Endothelial cell of umbilical vein (primary cell): ENCODE measurements at regions of chr10 and their contacts with region 1.

Region 1: GRCh38 chr10:74234569-74234968 is 83.5 kb downstream of the ADK start:
- DNase-seq: peak; percentile 36
- H3K4me3 ChIP-seq: no peak overlapping the region
- H3K27ac ChIP-seq: no peak overlapping the region
- H3K4me1 ChIP-seq: peaks cover 41% of the 10 kb centered on the region
- H3K27me3 ChIP-seq: no peaks in the 10 kb centered on the region
- CTCF ChIP-seq: no peak
- POLR2A ChIP-seq: no peak

Region 2: DNA sequence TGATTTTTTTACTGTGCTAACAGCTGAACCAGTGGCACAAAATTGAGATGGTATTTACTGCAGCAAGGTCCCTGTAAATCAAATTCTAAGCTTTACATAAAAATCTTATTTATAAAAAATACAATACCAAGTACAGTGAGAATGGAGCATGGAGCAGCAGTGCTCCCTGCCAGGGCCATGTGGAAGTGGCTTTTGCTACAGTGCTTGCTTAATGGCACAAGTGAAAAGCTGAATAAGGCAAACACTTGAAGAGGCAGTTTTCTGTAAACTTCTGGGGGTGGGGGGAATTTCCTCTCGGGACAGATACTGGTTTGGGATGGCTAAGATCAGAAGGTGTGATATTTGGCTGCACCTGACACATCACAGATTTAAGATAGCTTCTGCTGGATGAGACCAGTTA is 111.5 kb before region 1 on chr10:
- CTCF ChIA-PET with region 1: interaction called, 97 read pairs
- POLR2A ChIA-PET with region 1: no interaction called
- dilution Hi-C with region 1: no loop called
- intact Hi-C with region 1: loop called (anchors 1 kb)
- DNase-seq: no peak
- H3K4me3 ChIP-seq: no peak overlapping the region
- H3K27ac ChIP-seq: no peak overlapping the region
- H3K4me1 ChIP-seq: peaks cover 5% of the 10 kb centered on the region
- H3K27me3 ChIP-seq: no peaks in the 10 kb centered on the region
- CTCF ChIP-seq: no peak
- POLR2A ChIP-seq: no peak

Region 3: GRCh38 chr10:74145133-74145532 is 89.4 kb before region 1 on chr10:
- CTCF ChIA-PET with region 1: interaction called, 31 read pairs
- POLR2A ChIA-PET with region 1: interaction called, 3 read pairs
- dilution Hi-C with region 1: no loop called
- intact Hi-C with region 1: loop called (anchors 2 kb)
- DNase-seq: peak; percentile 97
- H3K4me3 ChIP-seq: peak overlapping the region in 1 of 3 experiments; percentile 33
- H3K27ac ChIP-seq: peak overlapping the region; percentile 47
- H3K4me1 ChIP-seq: peaks cover 25% of the 10 kb centered on the region
- H3K27me3 ChIP-seq: no peaks in the 10 kb centered on the region
- CTCF ChIP-seq: no peak
- POLR2A ChIP-seq: no peak

Region 4: GRCh38 chr10:74176380-74177139 is 58.0 kb before region 1 on chr10:
- CTCF ChIA-PET with region 1: interaction called, 7 read pairs
- POLR2A ChIA-PET with region 1: interaction called, 6 read pairs
- dilution Hi-C with region 1: no loop called
- intact Hi-C with region 1: loop called (anchors 1 kb)
- DNase-seq: peak; percentile 95
- H3K4me3 ChIP-seq: peak overlapping the region; percentile 32 to 80 (median 39)
- H3K27ac ChIP-seq: peak overlapping the region; percentile 41
- H3K4me1 ChIP-seq: peaks cover 15% of the 10 kb centered on the region
- H3K27me3 ChIP-seq: no peaks in the 10 kb centered on the region
- CTCF ChIP-seq: no peak
- POLR2A ChIP-seq: peak; percentile 91